Activated T-helper 2 cell treated with anti-CD3 and anti-CD28 coated beads, Interferon-gamma antibody, Interleukin-2, Interleukin-4, amounts not matched to agents 10 μg/mL and 5 μg/mL and 100 μg/mL, durations not matched to agents 14 hours and 24 hours and 36 hours (primary cell): ENCODE measurements at regions of chr19 and their contacts with region 1.

Region 1: GRCh38 chr19:6945733-6946132 is 58.4 kb downstream of the ADGRE1 start:
- DNase-seq: no peak
- H3K4me3 Mint-ChIP-seq: no peak overlapping the region
- H3K27ac Mint-ChIP-seq: no peak overlapping the region
- H3K4me1 Mint-ChIP-seq: peaks cover 11% of the 10 kb centered on the region
- H3K27me3 Mint-ChIP-seq: no peaks in the 10 kb centered on the region

Region 2: GRCh38 chr19:7004313-7004931 is 58.7 kb after region 1 on chr19:
- intact Hi-C with region 1: loop called (anchors 2 kb)
- DNase-seq: no peak
- H3K4me3 Mint-ChIP-seq: no peak overlapping the region
- H3K27ac Mint-ChIP-seq: no peak overlapping the region
- H3K4me1 Mint-ChIP-seq: peaks cover 16% of the 10 kb centered on the region
- H3K27me3 Mint-ChIP-seq: peaks cover 4% of the 10 kb centered on the region

Region 3: GRCh38 chr19:7137120-7137519 is 191.4 kb after region 1 on chr19:
- intact Hi-C with region 1: no loop called
- DNase-seq: no peak
- H3K4me3 Mint-ChIP-seq: no peak overlapping the region
- H3K27ac Mint-ChIP-seq: no peak overlapping the region
- H3K4me1 Mint-ChIP-seq: no peaks in the 10 kb centered on the region
- H3K27me3 Mint-ChIP-seq: no peaks in the 10 kb centered on the region